Posterior vena cava (tissue), 2 donors: ENCODE measurements at regions of chr7 and their contacts with region 1.

Region 1: GRCh38 chr7:104584620-104585019 is 256.2 kb downstream of the LHFPL3 start:
- DNase-seq: no peak

Region 2: GRCh38 chr7:104126411-104126841 is 458.2 kb before region 1 on chr7:
- intact Hi-C with region 1: no loop called
- DNase-seq: no peak

Region 3: GRCh38 chr7:104541897-104542296 is 42.7 kb before region 1 on chr7:
- intact Hi-C with region 1: loop called in 1 of 2 experiments (anchors 2 kb)
- DNase-seq: no peak

Region 4: DNA sequence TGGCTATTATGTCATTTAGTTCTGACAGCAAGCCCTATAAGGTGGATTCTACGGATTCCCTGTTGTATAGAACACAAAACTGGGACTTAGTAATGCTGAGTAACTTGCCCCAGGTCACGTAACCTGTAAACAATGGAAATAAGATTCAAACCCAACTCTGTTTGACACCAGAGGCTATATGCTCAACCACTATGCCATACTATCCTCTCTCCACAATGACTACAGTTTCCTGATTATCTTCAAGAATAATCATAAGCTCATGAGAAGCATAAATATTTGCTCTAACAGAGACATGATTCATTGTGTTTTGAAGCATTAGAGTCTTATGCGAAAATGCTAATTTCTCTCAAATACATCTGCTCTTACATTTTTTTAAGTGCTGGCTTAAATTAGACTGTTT is 14.9 kb before region 1 on chr7:
- intact Hi-C with region 1: no loop called
- DNase-seq: no peak

Region 5: DNA sequence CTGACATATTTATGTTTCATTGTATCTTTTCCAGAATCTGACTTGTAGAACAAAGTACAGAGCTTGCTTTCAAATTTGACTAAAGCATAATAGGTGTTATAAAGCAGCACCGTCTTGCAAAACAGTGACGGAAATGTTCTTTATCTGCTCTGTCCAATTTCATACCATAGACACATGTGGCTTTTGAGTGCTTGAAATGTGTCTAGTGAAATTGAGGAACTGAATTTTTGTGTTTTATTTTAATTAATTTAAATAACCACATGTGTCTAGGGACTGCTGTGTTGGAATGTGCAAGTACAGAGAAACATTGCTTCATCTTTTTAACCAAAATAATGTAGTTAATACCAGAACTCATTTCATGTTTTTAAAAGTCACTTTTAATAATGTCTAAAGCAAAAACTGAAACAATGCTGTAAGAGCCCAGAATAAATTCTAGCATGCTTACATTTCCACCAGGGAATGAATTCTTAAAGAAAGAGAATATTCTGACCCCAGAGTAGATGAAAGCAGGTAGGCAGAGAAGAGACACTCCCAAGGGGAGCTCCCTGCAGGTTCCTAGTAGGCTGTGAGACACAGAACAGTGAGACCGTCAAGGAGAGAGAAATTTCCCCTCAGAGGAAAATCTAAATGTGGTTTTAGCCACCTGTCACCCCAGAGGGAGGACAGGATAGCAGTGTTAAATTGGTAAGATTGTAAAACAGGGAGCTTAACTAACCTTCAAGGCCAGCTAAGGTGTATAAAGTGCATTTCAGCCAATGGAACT is 254.1 kb after region 1 on chr7:
- intact Hi-C with region 1: no loop called
- DNase-seq: no peak